HepG2 (cell line): ENCODE measurements at regions of chr10 and their contacts with region 1.

Region 1: GRCh38 chr10:67779465-67780203 is 58.4 kb downstream of the DNAJC12 start:
- DNase-seq: peak; percentile 73
- ATAC-seq: peak; percentile 87
- H3K4me3 ChIP-seq: no peak overlapping the region
- H3K27ac ChIP-seq: no peak overlapping the region
- H3K4me1 ChIP-seq: peaks cover 17% of the 10 kb centered on the region
- H3K27me3 ChIP-seq: 0 out of 5 replicates have a peak, but pooled peaks cover 0 to 6% of the 10 kb centered on the region in 2 experiments
- CTCF ChIP-seq: peak; percentile 81
- EP300 ChIP-seq: no peak
- POLR2A ChIP-seq: no peak
- RAD21 ChIP-seq: peak; percentile 73

Region 2: DNA sequence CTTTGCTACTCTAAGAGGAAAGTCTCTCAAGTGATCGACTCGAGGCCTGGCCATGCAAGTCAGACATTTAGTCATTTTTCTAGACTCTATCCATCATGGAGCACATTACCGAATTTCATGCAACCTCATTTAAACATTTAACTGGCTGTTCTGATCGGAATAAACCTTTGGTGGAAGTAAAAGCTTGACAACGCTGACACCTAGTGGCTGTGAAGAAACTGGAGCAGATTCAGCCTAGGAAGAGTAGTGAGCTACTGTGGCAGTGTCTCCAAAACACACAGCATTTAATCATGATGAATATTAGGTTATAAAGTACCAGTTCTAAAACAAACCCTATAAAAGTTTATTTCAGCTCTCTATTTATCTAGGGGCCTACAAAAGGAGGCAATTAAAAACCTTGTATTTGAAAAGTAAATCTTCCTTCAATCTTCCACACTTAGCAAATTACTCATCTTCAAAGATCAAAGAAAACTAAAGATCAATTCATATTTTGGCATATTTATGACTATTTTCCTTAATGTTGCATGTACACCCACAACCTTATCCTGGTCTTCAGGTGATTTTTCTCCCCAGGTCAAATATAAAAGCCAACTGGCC is 258.6 kb before region 1 on chr10:
- CTCF ChIA-PET with region 1: no interaction called
- POLR2A ChIA-PET with region 1: no interaction called
- in situ Hi-C with region 1: no loop called
- intact Hi-C with region 1: loop called (anchors 2 kb)
- DNase-seq: peak; percentile 38
- ATAC-seq: peak; percentile 92
- H3K4me3 ChIP-seq: no peak overlapping the region
- H3K27ac ChIP-seq: no peak overlapping the region
- H3K4me1 ChIP-seq: no peaks in the 10 kb centered on the region
- H3K27me3 ChIP-seq: no peaks in the 10 kb centered on the region
- CTCF ChIP-seq: peak; percentile 83
- EP300 ChIP-seq: no peak
- POLR2A ChIP-seq: no peak
- RAD21 ChIP-seq: peak; percentile 55; the same call in 1 of the 2 replicates

Region 3: GRCh38 chr10:67587771-67588170 is 191.9 kb before region 1 on chr10:
- CTCF ChIA-PET with region 1: no interaction called
- POLR2A ChIA-PET with region 1: no interaction called
- in situ Hi-C with region 1: no loop called
- intact Hi-C with region 1: no loop called
- DNase-seq: no peak
- ATAC-seq: no peak
- H3K4me3 ChIP-seq: no peak overlapping the region
- H3K27ac ChIP-seq: no peak overlapping the region
- H3K4me1 ChIP-seq: no peaks in the 10 kb centered on the region
- H3K27me3 ChIP-seq: no peaks in the 10 kb centered on the region
- CTCF ChIP-seq: no peak
- EP300 ChIP-seq: no peak
- POLR2A ChIP-seq: no peak
- RAD21 ChIP-seq: no peak

Region 4: GRCh38 chr10:67666416-67667034 is 113.1 kb before region 1 on chr10:
- CTCF ChIA-PET with region 1: interaction called, 18 read pairs
- POLR2A ChIA-PET with region 1: no interaction called
- in situ Hi-C with region 1: no loop called
- intact Hi-C with region 1: loop called (anchors 1 kb)
- DNase-seq: peak; percentile 21
- ATAC-seq: no peak
- H3K4me3 ChIP-seq: no peak overlapping the region
- H3K27ac ChIP-seq: no peak overlapping the region
- H3K4me1 ChIP-seq: no peaks in the 10 kb centered on the region
- H3K27me3 ChIP-seq: no peaks in the 10 kb centered on the region; a peak in 1 of 5 replicates
- CTCF ChIP-seq: peak; percentile 34; the same call in 1 of the 2 replicates
- EP300 ChIP-seq: no peak
- POLR2A ChIP-seq: no peak
- RAD21 ChIP-seq: no peak

Region 5: GRCh38 chr10:67697724-67698131 is 81.9 kb before region 1 on chr10:
- CTCF ChIA-PET with region 1: interaction called, 58 read pairs
- POLR2A ChIA-PET with region 1: no interaction called
- in situ Hi-C with region 1: loop called (anchors 5 kb)
- intact Hi-C with region 1: loop called (anchors 1 kb)
- DNase-seq: peak; percentile 37
- ATAC-seq: peak; percentile 73
- H3K4me3 ChIP-seq: no peak overlapping the region
- H3K27ac ChIP-seq: no peak overlapping the region
- H3K4me1 ChIP-seq: no peaks in the 10 kb centered on the region
- H3K27me3 ChIP-seq: peaks cover 0 to 5% of the 10 kb centered on the region in 2 experiments; a peak in 3 of 5 replicates
- CTCF ChIP-seq: peak; percentile 53
- EP300 ChIP-seq: no peak
- POLR2A ChIP-seq: no peak
- RAD21 ChIP-seq: peak; percentile 24; the same call in 1 of the 2 replicates

Region 6: GRCh38 chr10:68301790-68302502 is 522.3 kb after region 1 on chr10:
- CTCF ChIA-PET with region 1: no interaction called
- POLR2A ChIA-PET with region 1: no interaction called
- in situ Hi-C with region 1: no loop called
- intact Hi-C with region 1: loop called (anchors 5 kb)
- DNase-seq: peak; percentile 50
- ATAC-seq: peak; percentile 75
- H3K4me3 ChIP-seq: no peak overlapping the region
- H3K27ac ChIP-seq: no peak overlapping the region
- H3K4me1 ChIP-seq: peaks cover 41% of the 10 kb centered on the region
- H3K27me3 ChIP-seq: no peaks in the 10 kb centered on the region
- CTCF ChIP-seq: peak; percentile 67
- EP300 ChIP-seq: no peak
- POLR2A ChIP-seq: no peak
- RAD21 ChIP-seq: peak; percentile 44; the same call in 1 of the 2 replicates